ENCODE measurements at regions of chr12 and their contacts with region 1.

Region 1: DNA sequence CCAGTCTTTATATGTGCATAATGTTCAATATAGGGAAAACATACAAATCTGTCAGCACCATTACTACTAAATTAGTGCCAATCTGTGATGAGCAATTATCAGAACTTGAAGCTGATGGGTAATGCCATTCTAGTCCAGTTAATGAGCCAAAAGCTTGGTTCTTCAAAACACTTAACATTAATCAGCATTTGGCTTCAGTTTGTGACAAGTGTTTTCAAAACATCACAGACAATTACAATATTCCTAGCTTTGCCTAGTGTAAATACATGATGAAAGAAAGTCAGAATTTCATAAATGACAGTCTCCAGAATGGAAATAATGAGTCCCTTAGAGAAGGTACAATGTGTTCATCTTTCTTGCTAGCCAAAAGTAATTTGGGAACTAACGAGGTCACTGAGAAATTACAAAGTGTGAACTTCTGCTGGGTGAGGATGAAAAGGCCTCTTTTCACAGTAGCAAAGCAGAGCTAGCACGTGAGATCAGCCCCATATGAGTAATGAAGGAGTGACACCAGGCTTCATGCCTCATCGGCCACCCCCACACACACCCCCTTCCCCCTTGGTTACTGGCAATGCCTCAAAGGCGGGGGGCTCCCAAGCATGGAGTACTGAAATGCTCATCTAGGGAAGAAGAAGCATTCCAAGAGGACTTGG is 180.6 kb upstream of the EEA1 start:
- DNase-seq: peak; percentile 68
- H3K4me3 Mint-ChIP-seq: no peak overlapping the region
- H3K27ac Mint-ChIP-seq: peak overlapping the region; percentile 75
- H3K4me1 Mint-ChIP-seq: peaks cover 19% of the 10 kb centered on the region
- H3K27me3 Mint-ChIP-seq: no peaks in the 10 kb centered on the region

Region 2: DNA sequence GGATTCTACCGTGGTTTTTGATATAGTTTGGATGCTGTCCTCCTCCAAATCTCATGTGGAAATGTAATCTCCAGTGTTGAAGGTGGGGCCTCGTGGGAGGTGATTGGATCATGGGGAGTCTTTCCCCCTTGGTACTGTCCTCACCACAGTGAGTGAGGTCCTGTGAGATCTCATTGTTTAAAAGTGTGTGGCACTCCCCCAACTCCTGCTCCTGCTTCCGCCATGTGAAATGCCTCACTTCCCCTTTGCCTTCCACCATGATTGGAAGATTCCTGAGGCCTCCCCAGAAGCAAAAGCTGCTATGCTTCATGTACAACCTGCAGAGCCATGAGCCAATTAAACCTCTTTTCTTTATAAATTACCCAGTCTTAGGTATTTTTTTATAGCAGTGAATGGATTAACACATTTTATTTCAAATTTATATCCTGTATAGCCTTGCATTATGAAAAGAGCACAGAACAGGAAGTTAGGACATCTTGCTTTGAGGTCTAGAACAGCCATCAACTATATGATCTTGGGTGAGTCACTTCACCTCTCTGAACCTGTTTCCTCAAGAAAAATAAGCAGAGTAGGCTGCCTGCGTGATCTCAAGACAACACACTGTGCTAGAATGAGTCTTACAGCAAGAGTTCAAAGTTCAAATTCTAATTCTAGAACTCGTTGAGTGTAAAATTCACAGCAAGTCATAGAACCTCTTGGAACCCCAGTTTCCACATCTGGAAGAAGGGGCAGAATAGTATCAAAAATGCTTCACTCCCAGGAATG is 19.7 kb before region 1 on chr12:
- CTCF ChIA-PET with region 1: no interaction called
- POLR2A ChIA-PET with region 1: no interaction called
- intact Hi-C with region 1: loop called (anchors 2 kb)
- DNase-seq: peak; percentile 43
- H3K4me3 Mint-ChIP-seq: no peak overlapping the region
- H3K27ac Mint-ChIP-seq: no peak overlapping the region
- H3K4me1 Mint-ChIP-seq: peaks cover 15% of the 10 kb centered on the region
- H3K27me3 Mint-ChIP-seq: no peaks in the 10 kb centered on the region

Region 3: GRCh38 chr12:93167841-93168492 is 58.3 kb after region 1 on chr12:
- CTCF ChIA-PET with region 1: no interaction called
- POLR2A ChIA-PET with region 1: no interaction called
- intact Hi-C with region 1: loop called (anchors 5 kb)
- DNase-seq: peak; percentile 67
- H3K4me3 Mint-ChIP-seq: peak overlapping the region; percentile 61
- H3K27ac Mint-ChIP-seq: no peak overlapping the region
- H3K4me1 Mint-ChIP-seq: peaks cover 15% of the 10 kb centered on the region
- H3K27me3 Mint-ChIP-seq: peaks cover 10% of the 10 kb centered on the region

Region 4: GRCh38 chr12:93387780-93388179 is 278.1 kb after region 1 on chr12:
- CTCF ChIA-PET with region 1: no interaction called
- POLR2A ChIA-PET with region 1: no interaction called
- intact Hi-C with region 1: loop called (anchors 5 kb)
- DNase-seq: peak; percentile 83
- H3K4me3 Mint-ChIP-seq: no peak overlapping the region
- H3K27ac Mint-ChIP-seq: peak overlapping the region; percentile 67
- H3K4me1 Mint-ChIP-seq: peaks cover 62% of the 10 kb centered on the region
- H3K27me3 Mint-ChIP-seq: no peaks in the 10 kb centered on the region